Caco-2 (cell line): ENCODE measurements at regions of chr5 and their contacts with region 1.

Region 1: GRCh38 chr5:150350524-150351344 is 6.8 kb upstream of the TCOF1 start:
- DNase-seq: peak; percentile 84 to 85
- H3K4me3 ChIP-seq: no peak overlapping the region
- H3K4me3 Mint-ChIP-seq: no peak overlapping the region
- H3K27ac Mint-ChIP-seq: no peak overlapping the region
- H3K4me1 ChIP-seq: no peaks in the 10 kb centered on the region
- H3K4me1 Mint-ChIP-seq: peaks cover 7% of the 10 kb centered on the region
- H3K27me3 ChIP-seq: no peaks in the 10 kb centered on the region
- H3K27me3 Mint-ChIP-seq: no peaks in the 10 kb centered on the region
- CTCF ChIP-seq: peak; percentile 68 to 82

Region 2: DNA sequence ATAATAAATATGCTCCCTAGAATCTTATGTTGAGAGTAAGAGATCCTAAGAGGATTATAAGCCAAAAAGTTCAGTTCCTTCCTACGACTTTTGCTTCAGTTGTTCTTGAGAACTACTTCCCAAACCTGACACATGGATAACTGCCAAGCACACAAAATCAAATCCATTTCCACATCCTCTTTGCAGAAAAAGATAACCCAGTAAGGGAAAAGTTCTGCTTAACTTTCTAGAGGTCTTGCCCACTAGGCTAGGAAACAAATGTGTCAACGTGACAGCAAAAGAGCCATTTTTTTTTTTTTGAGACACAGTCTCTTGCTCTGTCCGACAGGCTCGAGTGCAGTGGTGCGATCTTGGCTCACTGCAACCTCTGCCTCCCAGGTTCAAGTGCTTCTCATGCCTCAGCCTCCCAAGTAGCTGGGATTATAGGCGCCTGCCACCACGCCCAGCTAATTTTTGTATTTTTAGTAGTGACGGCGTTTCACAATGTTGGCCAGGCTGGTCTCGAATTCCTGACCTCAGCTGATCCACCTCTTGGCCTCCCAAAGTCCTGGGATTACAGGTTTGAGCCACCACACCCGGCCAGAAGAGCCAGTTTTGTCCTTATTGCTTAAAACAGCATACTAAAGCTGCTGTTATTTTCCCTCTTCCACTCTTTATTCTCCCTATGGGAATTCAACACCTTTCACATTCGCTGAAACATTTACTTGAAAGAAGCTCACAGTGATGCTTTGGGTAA is 823.7 kb before region 1 on chr5:
- CTCF ChIA-PET with region 1: no interaction called
- POLR2A ChIA-PET with region 1: no interaction called
- intact Hi-C with region 1: no loop called
- DNase-seq: peak in 1 of 2 experiments; percentile 9
- H3K4me3 ChIP-seq: no peak overlapping the region
- H3K4me3 Mint-ChIP-seq: no peak overlapping the region
- H3K27ac Mint-ChIP-seq: peak overlapping the region; percentile 67
- H3K4me1 ChIP-seq: peaks cover 17% of the 10 kb centered on the region
- H3K4me1 Mint-ChIP-seq: peaks cover 26% of the 10 kb centered on the region
- H3K27me3 ChIP-seq: no peaks in the 10 kb centered on the region
- H3K27me3 Mint-ChIP-seq: no peaks in the 10 kb centered on the region
- CTCF ChIP-seq: no peak

Region 3: GRCh38 chr5:150129813-150130492 is 220.8 kb before region 1 on chr5:
- CTCF ChIA-PET with region 1: no interaction called
- POLR2A ChIA-PET with region 1: no interaction called
- intact Hi-C with region 1: loop called (anchors 1 kb)
- DNase-seq: peak; percentile 80 to 86
- H3K4me3 ChIP-seq: no peak overlapping the region
- H3K4me3 Mint-ChIP-seq: no peak overlapping the region
- H3K27ac Mint-ChIP-seq: no peak overlapping the region
- H3K4me1 ChIP-seq: peaks cover 10% of the 10 kb centered on the region
- H3K4me1 Mint-ChIP-seq: peaks cover 9% of the 10 kb centered on the region
- H3K27me3 ChIP-seq: no peaks in the 10 kb centered on the region
- H3K27me3 Mint-ChIP-seq: no peaks in the 10 kb centered on the region
- CTCF ChIP-seq: peak; percentile 95 to 96

Region 4: GRCh38 chr5:150217873-150218692 is 132.7 kb before region 1 on chr5:
- CTCF ChIA-PET with region 1: no interaction called
- POLR2A ChIA-PET with region 1: no interaction called
- intact Hi-C with region 1: loop called (anchors 1 kb)
- DNase-seq: peak; percentile 83 to 89
- H3K4me3 ChIP-seq: no peak overlapping the region
- H3K4me3 Mint-ChIP-seq: no peak overlapping the region
- H3K27ac Mint-ChIP-seq: peak overlapping the region; percentile 54
- H3K4me1 ChIP-seq: peaks cover 19% of the 10 kb centered on the region
- H3K4me1 Mint-ChIP-seq: peaks cover 18% of the 10 kb centered on the region
- H3K27me3 ChIP-seq: no peaks in the 10 kb centered on the region
- H3K27me3 Mint-ChIP-seq: no peaks in the 10 kb centered on the region
- CTCF ChIP-seq: peak; percentile 83 to 93

Region 5: DNA sequence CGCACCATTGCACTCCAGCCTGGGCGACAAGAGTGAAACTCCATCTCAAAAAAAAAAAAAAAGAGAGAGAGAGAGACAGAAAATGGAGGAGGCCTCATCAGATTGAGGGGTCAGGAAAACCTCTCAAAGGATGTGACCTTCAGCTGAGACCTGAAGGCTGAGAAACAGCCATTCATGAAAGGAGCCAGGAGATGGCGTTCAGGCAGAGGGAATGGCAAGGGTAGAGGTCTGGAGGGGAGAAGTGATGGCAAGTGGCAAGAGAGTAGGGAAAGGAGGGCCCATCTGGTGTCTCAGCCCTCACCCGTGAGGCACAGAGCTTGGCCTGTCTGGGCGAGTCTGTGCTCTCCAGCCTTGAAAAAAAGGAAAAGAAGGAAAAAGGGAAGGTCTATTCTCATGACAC is 78.2 kb before region 1 on chr5:
- CTCF ChIA-PET with region 1: interaction called, 5 read pairs
- POLR2A ChIA-PET with region 1: no interaction called
- intact Hi-C with region 1: loop called (anchors 1 kb)
- DNase-seq: peak; percentile 57
- H3K4me3 ChIP-seq: no peak overlapping the region
- H3K4me3 Mint-ChIP-seq: no peak overlapping the region
- H3K27ac Mint-ChIP-seq: no peak overlapping the region
- H3K4me1 ChIP-seq: no peaks in the 10 kb centered on the region
- H3K4me1 Mint-ChIP-seq: no peaks in the 10 kb centered on the region
- H3K27me3 ChIP-seq: no peaks in the 10 kb centered on the region; the same call in 1 of the 2 replicates
- H3K27me3 Mint-ChIP-seq: peaks cover 3% of the 10 kb centered on the region
- CTCF ChIP-seq: peak; percentile 43 to 66

Region 6: GRCh38 chr5:150302301-150303069 is 48.2 kb before region 1 on chr5 and contains the start of gene ARSI:
- CTCF ChIA-PET with region 1: no interaction called
- POLR2A ChIA-PET with region 1: no interaction called
- intact Hi-C with region 1: loop called (anchors 2 kb)
- DNase-seq: peak; percentile 54 to 70
- H3K4me3 ChIP-seq: peak within 1 kb of the TSS; percentile 34
- H3K4me3 Mint-ChIP-seq: peak within 1 kb of the TSS; percentile 71
- H3K27ac Mint-ChIP-seq: peak within 1 kb of the TSS; percentile 21
- H3K4me1 ChIP-seq: peaks cover 5% of the 10 kb centered on the region
- H3K4me1 Mint-ChIP-seq: no peaks in the 10 kb centered on the region
- H3K27me3 ChIP-seq: no peaks in the 10 kb centered on the region
- H3K27me3 Mint-ChIP-seq: no peaks in the 10 kb centered on the region
- CTCF ChIP-seq: peak in 1 of 2 experiments; percentile 9
- total RNA-seq, gene ARSI: 0.52 and 0.65 TPM in 2 replicates